ENCODE measurements at regions of chr4 and their contacts with region 1.

Region 1: GRCh38 chr4:1289207-1290164 is at the start of gene MAEA:
- DNase-seq: peak; percentile 97
- ATAC-seq: peak; percentile 97
- H3K4me3 ChIP-seq: peak within 1 kb of the TSS; percentile 66 to 83 (median 79)
- H3K4me3 Mint-ChIP-seq: peak within 1 kb of the TSS; percentile 94
- H3K27ac ChIP-seq: peak within 1 kb of the TSS; percentile 65 to 88
- H3K27ac Mint-ChIP-seq: peak within 1 kb of the TSS; percentile 86
- H3K4me1 ChIP-seq: peaks cover 34 to 43% of the 10 kb centered on the region in 2 donors
- H3K4me1 Mint-ChIP-seq: peaks cover 38% of the 10 kb centered on the region
- H3K27me3 ChIP-seq: no peaks in the 10 kb centered on the region
- H3K27me3 Mint-ChIP-seq: no peaks in the 10 kb centered on the region
- CTCF ChIP-seq: no peak
- total RNA-seq, gene MAEA: 103 and 106 TPM in 2 replicates

Region 2: DNA sequence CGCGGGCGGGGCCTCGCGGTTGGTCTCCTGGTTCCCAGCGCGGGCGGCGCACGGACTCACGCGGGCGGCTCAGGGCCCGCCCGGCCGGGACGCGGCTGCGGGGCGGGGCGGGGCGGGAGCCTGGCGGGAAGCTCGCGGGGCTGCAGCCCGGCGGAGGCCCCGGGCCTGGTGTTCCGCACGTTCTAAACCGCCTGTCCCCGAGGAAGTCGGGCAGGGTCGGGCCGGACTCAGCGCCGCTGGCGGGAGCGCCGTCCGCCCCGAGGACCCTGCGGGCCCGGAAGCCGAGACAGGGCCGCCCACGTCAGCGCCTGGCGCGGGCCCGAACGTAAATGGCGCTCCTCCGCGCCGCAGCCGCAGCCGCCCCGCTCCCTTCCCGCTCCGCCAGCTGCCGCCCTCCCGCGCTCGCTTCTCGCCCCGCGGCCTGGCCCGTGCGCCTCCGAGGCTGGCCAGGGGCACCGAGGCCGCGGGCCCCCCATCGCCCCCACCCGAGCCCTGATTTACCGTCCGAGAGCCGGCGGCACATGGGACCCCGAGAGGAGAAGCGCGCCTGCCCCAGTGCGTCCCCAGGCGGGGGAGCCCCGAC is 40.2 kb before region 1 on chr4:
- CTCF ChIA-PET with region 1: interaction called, 6 read pairs
- POLR2A ChIA-PET with region 1: interaction called, 3 read pairs
- intact Hi-C with region 1: loop called (anchors 1 kb)
- DNase-seq: peak; percentile 95
- ATAC-seq: peak; percentile 73
- H3K4me3 ChIP-seq: peak overlapping the region; percentile 23 to 81 (median 62)
- H3K4me3 Mint-ChIP-seq: peak overlapping the region; percentile 92
- H3K27ac ChIP-seq: peak overlapping the region; percentile 84 to 85
- H3K27ac Mint-ChIP-seq: peak overlapping the region; percentile 97
- H3K4me1 ChIP-seq: peaks cover 47 to 57% of the 10 kb centered on the region in 2 donors
- H3K4me1 Mint-ChIP-seq: peaks cover 60% of the 10 kb centered on the region
- H3K27me3 ChIP-seq: no peaks in the 10 kb centered on the region
- H3K27me3 Mint-ChIP-seq: no peaks in the 10 kb centered on the region
- CTCF ChIP-seq: no peak

Region 3: GRCh38 chr4:1261107-1261928 is 28.2 kb before region 1 on chr4:
- CTCF ChIA-PET with region 1: no interaction called
- POLR2A ChIA-PET with region 1: no interaction called
- intact Hi-C with region 1: no loop called
- DNase-seq: no peak
- ATAC-seq: no peak
- H3K4me3 ChIP-seq: no peak overlapping the region
- H3K4me3 Mint-ChIP-seq: no peak overlapping the region
- H3K27ac ChIP-seq: no peak overlapping the region
- H3K27ac Mint-ChIP-seq: peak overlapping the region; percentile 15
- H3K4me1 ChIP-seq: peaks cover 0 to 4% of the 10 kb centered on the region in 2 donors
- H3K4me1 Mint-ChIP-seq: peaks cover 24% of the 10 kb centered on the region
- H3K27me3 ChIP-seq: no peaks in the 10 kb centered on the region
- H3K27me3 Mint-ChIP-seq: no peaks in the 10 kb centered on the region
- CTCF ChIP-seq: no peak

Region 4: GRCh38 chr4:1309261-1310010 is 19.9 kb after region 1 on chr4:
- CTCF ChIA-PET with region 1: no interaction called
- POLR2A ChIA-PET with region 1: no interaction called
- intact Hi-C with region 1: no loop called
- DNase-seq: peak; percentile 61
- ATAC-seq: peak; percentile 89
- H3K4me3 ChIP-seq: peak overlapping the region; percentile 17 to 35 (median 34)
- H3K4me3 Mint-ChIP-seq: peak overlapping the region; percentile 81
- H3K27ac ChIP-seq: peak overlapping the region in 1 of 2 donors; percentile 51
- H3K27ac Mint-ChIP-seq: peak overlapping the region; percentile 50
- H3K4me1 ChIP-seq: peaks cover 18 to 38% of the 10 kb centered on the region in 2 donors
- H3K4me1 Mint-ChIP-seq: peaks cover 53% of the 10 kb centered on the region
- H3K27me3 ChIP-seq: no peaks in the 10 kb centered on the region
- H3K27me3 Mint-ChIP-seq: no peaks in the 10 kb centered on the region
- CTCF ChIP-seq: no peak

Region 5: GRCh38 chr4:2172161-2172560 is 882.7 kb after region 1 on chr4:
- CTCF ChIA-PET with region 1: no interaction called
- POLR2A ChIA-PET with region 1: no interaction called
- intact Hi-C with region 1: no loop called
- DNase-seq: no peak
- ATAC-seq: no peak
- H3K4me3 ChIP-seq: no peak overlapping the region
- H3K4me3 Mint-ChIP-seq: no peak overlapping the region
- H3K27ac ChIP-seq: no peak overlapping the region
- H3K27ac Mint-ChIP-seq: no peak overlapping the region
- H3K4me1 ChIP-seq: no peaks in the 10 kb centered on the region
- H3K4me1 Mint-ChIP-seq: peaks cover 5% of the 10 kb centered on the region
- H3K27me3 ChIP-seq: no peaks in the 10 kb centered on the region
- H3K27me3 Mint-ChIP-seq: no peaks in the 10 kb centered on the region
- CTCF ChIP-seq: no peak